ENCODE measurements at regions of chr6 and their contacts with region 1.

Region 1: GRCh38 chr6:127516666-127517273 is 2.4 kb downstream of the MTCL3 start:
- DNase-seq: peak in 11 of 14 experiments; percentile 6 to 70 (median 31)
- ATAC-seq: peak; percentile 37
- H3K4me3 ChIP-seq: peak overlapping the region; percentile 80
- H3K4me3 Mint-ChIP-seq: peak overlapping the region; percentile 87
- H3K27ac ChIP-seq: no peak overlapping the region
- H3K27ac Mint-ChIP-seq: peak overlapping the region; percentile 57
- H3K4me1 ChIP-seq: peaks cover 37% of the 10 kb centered on the region
- H3K4me1 Mint-ChIP-seq: peaks cover 38% of the 10 kb centered on the region
- H3K27me3 ChIP-seq: peaks cover 14 to 35% of the 10 kb centered on the region in 2 experiments
- H3K27me3 Mint-ChIP-seq: peaks cover 42% of the 10 kb centered on the region
- CTCF ChIP-seq: peak; percentile 65

Region 2: DNA sequence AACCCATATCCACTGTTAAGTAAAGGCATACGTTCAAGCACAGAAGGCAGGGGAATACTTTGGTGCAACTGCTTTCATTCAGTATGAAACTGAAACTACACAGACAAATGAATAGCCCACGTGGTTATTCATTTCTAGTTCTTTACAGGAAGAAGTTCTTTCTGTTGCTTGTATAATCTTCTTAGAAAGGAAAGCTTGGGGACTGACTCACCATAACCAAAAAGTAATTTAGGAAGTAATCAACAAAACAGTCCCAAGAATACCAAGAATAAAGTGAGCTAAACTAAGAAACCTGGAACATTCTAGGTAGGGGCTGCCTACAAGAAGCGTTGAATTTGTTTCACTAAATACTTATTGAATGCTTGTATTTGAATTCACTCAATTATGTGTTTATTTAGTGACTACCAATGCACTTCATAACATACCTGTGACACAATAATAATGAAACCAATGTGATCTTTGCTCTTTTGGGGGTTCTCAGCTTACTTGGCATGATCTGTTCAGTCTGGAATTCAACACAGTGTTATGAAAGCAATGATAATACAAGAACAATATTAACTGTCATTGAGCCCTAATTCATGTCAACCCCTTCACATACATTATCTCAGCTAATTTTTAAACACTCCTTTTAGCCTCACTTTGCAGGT is 32.4 kb before region 1 on chr6:
- CTCF ChIA-PET with region 1: interaction called, 26 read pairs
- POLR2A ChIA-PET with region 1: interaction called, 14 read pairs
- intact Hi-C with region 1: no loop called
- DNase-seq: peak in 3 of 14 experiments; percentile 41 to 70 (median 41)
- ATAC-seq: peak; percentile 73
- H3K4me3 ChIP-seq: peak overlapping the region; percentile 31
- H3K4me3 Mint-ChIP-seq: peak overlapping the region; percentile 77
- H3K27ac ChIP-seq: peak overlapping the region in 1 of 2 donors; percentile 20
- H3K27ac Mint-ChIP-seq: peak overlapping the region; percentile 12
- H3K4me1 ChIP-seq: no peaks in the 10 kb centered on the region
- H3K4me1 Mint-ChIP-seq: peaks cover 20% of the 10 kb centered on the region
- H3K27me3 ChIP-seq: no peaks in the 10 kb centered on the region
- H3K27me3 Mint-ChIP-seq: no peaks in the 10 kb centered on the region
- CTCF ChIP-seq: no peak

Region 3: GRCh38 chr6:128520436-128521281 is 1003.9 kb after region 1 on chr6 and contains the start of gene PTPRK:
- CTCF ChIA-PET with region 1: no interaction called
- POLR2A ChIA-PET with region 1: no interaction called
- intact Hi-C with region 1: loop called in 1 of 2 experiments (anchors 10 kb)
- DNase-seq: peak; percentile 72 to 92 (median 86)
- ATAC-seq: peak; percentile 84
- H3K4me3 ChIP-seq: peak within 1 kb of the TSS; percentile 80
- H3K4me3 Mint-ChIP-seq: peak within 1 kb of the TSS; percentile 98
- H3K27ac ChIP-seq: no peak within 1 kb of the TSS
- H3K27ac Mint-ChIP-seq: peak within 1 kb of the TSS; percentile 88
- H3K4me1 ChIP-seq: peaks cover 26% of the 10 kb centered on the region
- H3K4me1 Mint-ChIP-seq: peaks cover 19% of the 10 kb centered on the region
- H3K27me3 ChIP-seq: peaks cover 32 to 63% of the 10 kb centered on the region in 2 experiments
- H3K27me3 Mint-ChIP-seq: peaks cover 86% of the 10 kb centered on the region
- CTCF ChIP-seq: no peak
- total RNA-seq, gene PTPRK: 8.4 to 10.3 TPM